Mammary epithelial cell (primary cell): ENCODE measurements at regions of chr9 and their contacts with region 1.

Region 1: GRCh38 chr9:90870621-90871326 is 69.2 kb downstream of the SYK start:
- DNase-seq: peak; percentile 26
- H3K4me3 ChIP-seq: no peak overlapping the region
- H3K27ac ChIP-seq: no peak overlapping the region
- H3K4me1 ChIP-seq: no peaks in the 10 kb centered on the region
- H3K27me3 ChIP-seq: no peaks in the 10 kb centered on the region
- CTCF ChIP-seq: peak; percentile 88 to 92

Region 2: DNA sequence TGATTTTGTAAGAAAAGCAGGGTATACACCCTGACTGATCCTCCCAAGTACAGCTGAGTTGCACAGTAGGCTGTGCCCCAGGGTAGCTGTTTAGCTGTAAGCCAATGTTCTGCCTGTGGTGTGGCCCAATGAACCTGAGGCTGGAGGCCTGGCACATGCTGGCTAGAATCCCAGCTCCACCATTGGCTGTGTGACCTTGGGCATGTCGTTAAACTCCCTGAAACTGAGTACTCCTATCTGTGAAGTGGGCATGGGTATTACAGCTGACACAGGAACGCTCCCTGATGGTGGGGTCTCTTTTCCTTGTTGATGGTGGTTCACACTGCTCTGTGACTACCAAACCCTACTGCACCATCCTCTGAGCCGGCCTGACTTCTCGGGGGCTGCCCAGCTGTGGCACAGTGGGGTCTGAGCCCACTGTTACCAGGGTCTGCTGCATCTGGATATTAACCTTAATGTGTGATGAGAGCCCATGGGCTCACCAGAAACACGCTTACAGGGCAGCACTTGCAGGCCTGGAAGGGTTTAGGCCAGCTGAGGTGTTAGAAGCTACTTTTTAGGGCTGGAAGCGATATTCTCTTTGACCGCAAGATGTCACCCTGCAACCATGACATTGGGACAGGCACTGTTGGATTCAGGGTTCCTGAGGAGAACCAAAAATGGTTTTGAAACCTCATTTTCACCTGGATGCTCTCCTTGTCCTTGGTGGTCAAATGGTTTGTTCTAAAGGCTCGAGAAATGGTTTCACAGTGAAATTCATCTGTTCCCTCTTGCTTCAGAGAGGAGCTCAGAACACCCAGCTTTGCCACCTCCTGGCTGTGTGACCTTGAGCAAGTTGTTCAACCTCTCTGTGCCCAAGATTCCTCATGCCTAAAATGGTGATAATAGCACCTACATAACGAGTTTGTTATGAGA is 1272.8 kb before region 1 on chr9:
- CTCF ChIA-PET with region 1: no interaction called
- dilution Hi-C with region 1: no loop called
- in situ Hi-C with region 1: loop called in 1 of 2 experiments (anchors 25 kb)
- intact Hi-C with region 1: loop called (anchors 2 kb)
- DNase-seq: peak; percentile 55
- H3K4me3 ChIP-seq: no peak overlapping the region
- H3K27ac ChIP-seq: no peak overlapping the region
- H3K4me1 ChIP-seq: no peaks in the 10 kb centered on the region
- H3K27me3 ChIP-seq: peaks cover 2% of the 10 kb centered on the region
- CTCF ChIP-seq: peak; percentile 74 to 82

Region 3: GRCh38 chr9:90142580-90142979 is 728.2 kb before region 1 on chr9:
- CTCF ChIA-PET with region 1: no interaction called
- dilution Hi-C with region 1: no loop called
- in situ Hi-C with region 1: loop called in 1 of 2 experiments (anchors 10 kb)
- intact Hi-C with region 1: loop called (anchors 1 kb)
- DNase-seq: peak; percentile 35
- H3K4me3 ChIP-seq: no peak overlapping the region
- H3K27ac ChIP-seq: no peak overlapping the region
- H3K4me1 ChIP-seq: no peaks in the 10 kb centered on the region
- H3K27me3 ChIP-seq: peaks cover 2% of the 10 kb centered on the region
- CTCF ChIP-seq: peak; percentile 50 to 58

Region 4: GRCh38 chr9:90219548-90220118 is 651.1 kb before region 1 on chr9:
- CTCF ChIA-PET with region 1: no interaction called
- dilution Hi-C with region 1: no loop called
- in situ Hi-C with region 1: loop called in 1 of 2 experiments (anchors 10 kb)
- intact Hi-C with region 1: no loop called
- DNase-seq: no peak
- H3K4me3 ChIP-seq: no peak overlapping the region
- H3K27ac ChIP-seq: no peak overlapping the region
- H3K4me1 ChIP-seq: no peaks in the 10 kb centered on the region
- H3K27me3 ChIP-seq: no peaks in the 10 kb centered on the region
- CTCF ChIP-seq: peak in 1 of 2 donors; percentile 24

Region 5: GRCh38 chr9:90240541-90240940 is 630.2 kb before region 1 on chr9:
- CTCF ChIA-PET with region 1: no interaction called
- dilution Hi-C with region 1: no loop called
- in situ Hi-C with region 1: loop called in 1 of 2 experiments (anchors 25 kb)
- intact Hi-C with region 1: no loop called
- DNase-seq: peak; percentile 9
- H3K4me3 ChIP-seq: no peak overlapping the region
- H3K27ac ChIP-seq: no peak overlapping the region
- H3K4me1 ChIP-seq: no peaks in the 10 kb centered on the region
- H3K27me3 ChIP-seq: no peaks in the 10 kb centered on the region
- CTCF ChIP-seq: no peak

Region 6: GRCh38 chr9:90349907-90350306 is 520.9 kb before region 1 on chr9:
- CTCF ChIA-PET with region 1: no interaction called
- dilution Hi-C with region 1: no loop called
- in situ Hi-C with region 1: no loop called
- intact Hi-C with region 1: no loop called
- DNase-seq: no peak
- H3K4me3 ChIP-seq: no peak overlapping the region
- H3K27ac ChIP-seq: no peak overlapping the region
- H3K4me1 ChIP-seq: peaks cover under 1% of the 10 kb centered on the region
- H3K27me3 ChIP-seq: no peaks in the 10 kb centered on the region
- CTCF ChIP-seq: no peak

Region 7: DNA sequence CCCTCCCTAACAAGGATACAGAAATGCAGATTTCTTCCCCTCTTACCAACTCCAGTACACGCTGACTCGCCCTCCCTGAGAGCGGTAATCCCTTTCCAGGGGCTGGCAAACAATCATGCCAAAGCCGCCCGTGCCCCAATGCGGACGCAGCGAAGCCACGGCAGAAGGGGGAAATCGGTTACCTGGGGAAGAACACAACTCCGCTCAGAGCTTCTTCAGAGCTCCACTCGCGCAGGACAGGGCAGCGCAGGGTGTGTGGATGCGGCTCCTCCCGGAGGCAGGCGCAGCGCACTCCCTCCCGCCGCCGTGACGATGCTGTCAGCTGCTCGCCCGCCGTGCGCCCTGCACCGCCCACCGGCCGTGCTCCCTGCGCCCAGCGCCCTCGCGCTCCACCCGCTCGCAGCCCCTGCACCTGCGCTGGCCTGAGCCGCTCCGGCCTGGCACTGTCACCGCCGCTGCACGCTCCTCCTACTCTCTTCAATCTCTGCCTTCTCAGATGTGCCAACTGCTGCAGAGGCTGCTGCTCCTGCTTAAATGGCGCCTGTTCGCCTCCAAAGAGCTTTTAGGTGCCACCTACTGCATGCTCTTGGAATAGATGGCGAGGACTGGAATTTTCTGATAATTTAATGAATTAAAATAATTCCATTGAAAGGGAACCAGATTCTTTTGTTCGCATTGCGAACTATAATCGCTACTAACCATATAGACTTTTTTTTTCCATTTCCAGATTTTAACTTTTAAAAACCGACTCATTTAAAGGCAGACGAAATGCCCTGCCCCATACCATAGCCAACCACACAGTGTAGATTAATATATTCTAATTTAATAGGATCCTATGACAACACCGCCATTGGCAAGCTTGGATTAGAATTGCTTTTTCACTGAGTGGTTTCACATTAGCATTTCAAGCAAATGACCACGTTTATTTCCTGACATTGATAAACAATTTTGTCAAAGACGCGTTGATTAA is 227.9 kb before region 1 on chr9 and contains the start of gene DIRAS2:
- CTCF ChIA-PET with region 1: no interaction called
- dilution Hi-C with region 1: no loop called
- in situ Hi-C with region 1: loop called in 1 of 2 experiments (anchors 25 kb)
- intact Hi-C with region 1: loop called (anchors 5 kb)
- DNase-seq: peak; percentile 59
- H3K4me3 ChIP-seq: peak within 1 kb of the TSS; percentile 30 to 55 (median 51)
- H3K27ac ChIP-seq: no peak within 1 kb of the TSS
- H3K4me1 ChIP-seq: peaks cover 5% of the 10 kb centered on the region
- H3K27me3 ChIP-seq: peaks cover 13% of the 10 kb centered on the region
- CTCF ChIP-seq: peak; percentile 30 to 59
- total RNA-seq, gene DIRAS2: not detected

Region 8: GRCh38 chr9:90684736-90685135 is 186.0 kb before region 1 on chr9:
- CTCF ChIA-PET with region 1: no interaction called
- dilution Hi-C with region 1: no loop called
- in situ Hi-C with region 1: no loop called
- intact Hi-C with region 1: no loop called
- DNase-seq: no peak
- H3K4me3 ChIP-seq: no peak overlapping the region
- H3K27ac ChIP-seq: no peak overlapping the region
- H3K4me1 ChIP-seq: no peaks in the 10 kb centered on the region
- H3K27me3 ChIP-seq: peaks cover 2% of the 10 kb centered on the region
- CTCF ChIP-seq: no peak

Region 9: GRCh38 chr9:90773617-90774016 is 97.2 kb before region 1 on chr9:
- CTCF ChIA-PET with region 1: no interaction called
- dilution Hi-C with region 1: no loop called
- in situ Hi-C with region 1: no loop called
- intact Hi-C with region 1: loop called (anchors 5 kb)
- DNase-seq: peak; percentile 9
- H3K4me3 ChIP-seq: no peak overlapping the region
- H3K27ac ChIP-seq: no peak overlapping the region
- H3K4me1 ChIP-seq: peaks cover 3% of the 10 kb centered on the region
- H3K27me3 ChIP-seq: no peaks in the 10 kb centered on the region
- CTCF ChIP-seq: peak; percentile 47 to 61